Panc1 (cell line): ENCODE measurements at regions of chr9 and their contacts with region 1.

Region 1: GRCh38 chr9:121354770-121355169 is 15.3 kb downstream of the STOM start:
- DNase-seq: no peak
- ATAC-seq: no peak
- H3K4me3 ChIP-seq: no peak overlapping the region
- H3K27ac ChIP-seq: no peak overlapping the region
- H3K4me1 ChIP-seq: no peaks in the 10 kb centered on the region; the same call in 1 of the 2 replicates
- H3K27me3 ChIP-seq: no peaks in the 10 kb centered on the region
- CTCF ChIP-seq: no peak

Region 2: GRCh38 chr9:121115466-121115865 is 239.3 kb before region 1 on chr9:
- CTCF ChIA-PET with region 1: no interaction called
- POLR2A ChIA-PET with region 1: interaction called, 11 read pairs
- in situ Hi-C with region 1: no loop called
- intact Hi-C with region 1: no loop called
- DNase-seq: no peak
- ATAC-seq: no peak
- H3K4me3 ChIP-seq: no peak overlapping the region
- H3K27ac ChIP-seq: no peak overlapping the region
- H3K4me1 ChIP-seq: peaks cover 2% of the 10 kb centered on the region
- H3K27me3 ChIP-seq: no peaks in the 10 kb centered on the region
- CTCF ChIP-seq: no peak

Region 3: DNA sequence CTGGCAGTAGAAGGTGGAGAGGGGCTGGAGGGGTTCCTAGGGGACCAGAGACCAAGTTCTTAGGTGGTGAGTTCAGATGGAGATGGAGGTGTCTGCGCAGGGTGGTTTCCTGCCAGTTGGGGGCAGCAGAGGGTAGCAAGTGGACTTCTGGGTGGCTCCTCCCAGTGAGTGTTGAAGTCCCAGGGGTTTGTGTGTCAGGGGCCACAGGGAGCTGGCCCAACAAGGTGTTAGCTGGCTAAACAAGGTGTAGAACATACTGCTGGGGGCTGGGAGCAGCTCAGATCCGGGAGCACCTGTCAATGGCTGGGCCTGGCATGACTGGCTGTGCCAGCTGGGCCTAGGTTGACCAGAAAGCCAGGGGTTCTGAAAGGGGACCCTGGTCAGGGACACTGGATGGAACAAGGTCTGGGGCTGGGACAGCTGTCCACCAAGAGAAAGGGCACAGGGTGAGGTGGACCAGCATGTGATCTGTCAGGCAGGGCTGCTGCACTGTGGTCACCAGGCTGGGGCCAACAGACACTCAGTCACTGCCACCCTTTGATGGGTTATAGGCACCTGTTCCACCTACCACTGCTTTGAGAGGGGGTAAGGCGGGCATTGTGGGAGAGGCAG is 332.3 kb after region 1 on chr9:
- CTCF ChIA-PET with region 1: no interaction called
- POLR2A ChIA-PET with region 1: no interaction called
- in situ Hi-C with region 1: no loop called
- intact Hi-C with region 1: no loop called
- DNase-seq: peak; percentile 42
- ATAC-seq: peak; percentile 83
- H3K4me3 ChIP-seq: no peak overlapping the region
- H3K27ac ChIP-seq: no peak overlapping the region
- H3K4me1 ChIP-seq: no peaks in the 10 kb centered on the region
- H3K27me3 ChIP-seq: no peaks in the 10 kb centered on the region
- CTCF ChIP-seq: peak; percentile 87